Aorta (tissue), 5 donors: ENCODE measurements at regions of chr11 and their contacts with region 1.

Region 1: GRCh38 chr11:74321487-74322188 is 10.2 kb upstream of the P4HA3 start:
- DNase-seq: no peak
- ATAC-seq: peak; percentile 64
- H3K4me3 ChIP-seq: no peak overlapping the region
- H3K27ac ChIP-seq: no peak overlapping the region
- H3K4me1 ChIP-seq: peaks cover 3 to 7% of the 10 kb centered on the region in 2 donors
- H3K27me3 ChIP-seq: no peaks in the 10 kb centered on the region

Region 2: DNA sequence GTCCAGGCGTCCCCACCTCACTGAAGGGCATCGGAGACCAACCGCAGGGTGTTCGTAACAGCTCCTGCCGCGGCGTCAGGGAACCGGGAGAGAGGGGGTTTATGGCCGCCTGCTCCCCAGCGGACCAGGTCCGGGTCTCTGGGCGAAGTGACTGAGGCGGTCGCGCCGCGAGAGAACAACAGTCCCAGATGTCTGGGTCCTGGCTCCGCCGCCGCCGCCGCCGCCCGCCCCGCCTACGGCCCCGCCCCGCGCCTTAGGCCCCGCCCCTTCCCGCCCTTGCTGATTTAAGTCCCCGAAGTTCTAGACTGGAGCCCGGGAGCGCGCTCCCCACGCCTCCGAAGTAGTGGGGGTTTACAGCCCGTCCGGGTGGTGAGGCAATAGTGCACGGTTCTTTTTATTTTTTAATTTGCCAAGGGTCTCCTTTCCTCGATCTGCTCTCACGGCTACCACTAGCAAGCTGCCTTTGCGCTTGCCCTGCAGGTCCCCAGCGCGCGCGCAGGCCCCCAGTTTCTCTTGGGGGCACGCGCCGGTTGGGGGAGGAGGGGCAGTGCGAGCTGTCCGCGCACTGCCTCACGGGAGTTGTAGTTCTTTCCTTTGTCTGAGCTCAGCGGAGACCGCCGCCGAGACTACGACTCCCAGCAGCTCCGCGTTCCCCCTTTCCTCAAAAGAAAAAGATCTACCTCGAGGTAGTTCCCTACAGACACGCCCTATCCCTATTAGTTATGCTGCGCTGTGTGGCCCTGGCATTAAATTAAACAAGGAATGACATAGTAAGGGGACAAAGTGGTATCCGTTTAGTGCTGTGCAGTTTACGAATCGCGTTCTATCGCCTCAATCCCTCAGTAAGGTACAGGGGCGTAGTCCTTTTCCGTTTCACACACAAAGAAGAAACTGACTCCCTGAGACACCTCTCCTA is 76.9 kb after region 1 on chr11 and contains the start of gene PGM2L1:
- intact Hi-C with region 1: loop called in 1 of 2 experiments (anchors 5 kb)
- DNase-seq: peak; percentile 96 to 97
- ATAC-seq: peak; percentile 98
- H3K4me3 ChIP-seq: peak within 1 kb of the TSS; percentile 92 to 94
- H3K27ac ChIP-seq: peak within 1 kb of the TSS in 1 of 2 donors; percentile 92
- H3K4me1 ChIP-seq: peaks cover 1 to 3% of the 10 kb centered on the region in 2 donors
- H3K27me3 ChIP-seq: no peaks in the 10 kb centered on the region
- total RNA-seq, gene PGM2L1: 13.5 to 18.8 TPM

Region 3: DNA sequence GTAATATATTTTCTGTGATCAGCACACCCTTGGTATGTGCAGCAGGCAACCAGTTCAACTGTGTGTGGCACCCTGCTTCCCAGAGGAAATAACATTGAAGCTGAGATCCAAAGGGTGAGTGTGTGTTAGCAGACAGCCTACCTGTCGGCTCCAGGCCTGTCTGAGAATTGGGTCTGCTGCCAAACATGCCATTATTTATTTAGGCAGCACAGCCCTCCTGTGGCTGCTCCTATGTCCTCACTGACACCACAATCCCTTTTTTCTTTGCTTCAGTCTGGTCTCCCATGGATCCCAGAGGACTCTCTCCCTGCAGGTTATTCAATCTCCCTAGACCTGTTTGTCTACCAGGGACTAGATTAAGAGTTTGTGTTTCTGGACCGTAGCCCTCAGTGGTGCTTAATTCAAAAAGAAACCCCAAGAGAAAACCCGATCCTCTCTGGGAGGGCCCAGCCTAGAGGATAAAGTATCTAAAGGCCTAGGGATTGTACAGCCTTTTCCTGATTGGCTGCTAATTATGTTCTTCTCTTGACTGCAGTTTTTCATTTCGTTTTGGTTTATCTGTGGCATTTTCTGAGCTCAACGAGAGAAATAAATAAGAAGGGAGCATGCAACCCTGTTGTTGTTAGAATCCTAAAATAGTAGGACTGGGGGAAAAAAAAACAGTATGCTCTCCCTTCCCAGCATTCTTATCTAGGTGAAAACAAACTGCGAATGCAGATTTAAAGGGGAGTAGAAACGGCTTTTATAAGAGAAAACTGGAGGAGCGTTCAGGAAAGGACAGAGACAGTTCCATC is 121.6 kb after region 1 on chr11:
- intact Hi-C with region 1: loop called in 1 of 2 experiments (anchors 5 kb)
- DNase-seq: no peak
- ATAC-seq: no peak
- H3K4me3 ChIP-seq: no peak overlapping the region
- H3K27ac ChIP-seq: peak overlapping the region; percentile 36 to 82
- H3K4me1 ChIP-seq: peaks cover 0 to 12% of the 10 kb centered on the region in 2 donors
- H3K27me3 ChIP-seq: no peaks in the 10 kb centered on the region